CD4-positive, alpha-beta memory T cell (primary cell): ENCODE measurements at regions of chr9 and their contacts with region 1.

Region 1: DNA sequence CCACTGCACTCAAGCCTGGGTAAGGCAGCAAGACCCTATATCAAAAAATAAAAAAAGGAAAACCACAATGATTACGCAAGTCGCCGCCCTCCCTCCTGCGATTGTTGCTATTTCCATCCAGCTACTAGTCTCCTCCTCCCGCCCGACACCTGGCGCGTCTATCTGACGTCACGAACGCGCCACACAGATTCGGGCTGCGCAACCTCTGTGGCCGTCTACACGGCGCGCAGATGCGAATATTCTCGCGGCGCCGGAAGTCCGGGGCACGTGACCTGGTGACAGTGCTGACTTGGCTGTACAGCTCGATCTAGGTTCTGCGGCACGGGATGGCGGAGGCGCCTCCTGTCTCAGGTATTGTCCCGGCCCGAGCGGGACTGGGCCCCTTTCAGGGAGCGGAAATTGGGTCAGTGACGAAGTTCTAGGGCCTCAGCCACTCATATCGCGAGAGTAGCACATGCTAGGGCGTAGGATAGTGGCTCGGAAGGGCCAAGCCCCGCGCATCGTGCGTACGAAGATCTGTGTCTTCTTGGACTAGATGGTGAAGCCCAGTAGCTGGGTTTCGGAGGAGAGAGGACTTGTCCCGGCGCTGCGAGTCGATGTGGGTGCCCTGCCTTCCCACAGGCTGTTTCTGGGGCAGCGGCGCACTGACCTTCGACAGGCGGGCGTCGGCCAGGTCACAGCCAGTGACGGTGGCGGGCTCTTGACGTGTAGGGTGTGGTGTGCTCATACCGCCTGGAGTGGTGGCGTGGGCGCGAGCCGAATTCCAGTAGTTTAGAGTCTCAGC is at the start of gene NFX1:
- DNase-seq: peak; percentile 99 to 100 (median 100)
- H3K4me3 ChIP-seq: peak within 1 kb of the TSS; percentile 63 to 79
- H3K4me3 Mint-ChIP-seq: peak within 1 kb of the TSS; percentile 84 to 98 (median 96)
- H3K27ac ChIP-seq: peak within 1 kb of the TSS; percentile 98
- H3K27ac Mint-ChIP-seq: peak within 1 kb of the TSS; percentile 96 to 100 (median 100)
- H3K4me1 ChIP-seq: peaks cover 62% of the 10 kb centered on the region
- H3K4me1 Mint-ChIP-seq: peaks cover 32 to 64% (median 51%) of the 10 kb centered on the region in 4 donors
- H3K27me3 ChIP-seq: no peaks in the 10 kb centered on the region
- H3K27me3 Mint-ChIP-seq: no peaks in the 10 kb centered on the region
- total RNA-seq, gene NFX1: 63.7 to 64.7 TPM

Region 2: DNA sequence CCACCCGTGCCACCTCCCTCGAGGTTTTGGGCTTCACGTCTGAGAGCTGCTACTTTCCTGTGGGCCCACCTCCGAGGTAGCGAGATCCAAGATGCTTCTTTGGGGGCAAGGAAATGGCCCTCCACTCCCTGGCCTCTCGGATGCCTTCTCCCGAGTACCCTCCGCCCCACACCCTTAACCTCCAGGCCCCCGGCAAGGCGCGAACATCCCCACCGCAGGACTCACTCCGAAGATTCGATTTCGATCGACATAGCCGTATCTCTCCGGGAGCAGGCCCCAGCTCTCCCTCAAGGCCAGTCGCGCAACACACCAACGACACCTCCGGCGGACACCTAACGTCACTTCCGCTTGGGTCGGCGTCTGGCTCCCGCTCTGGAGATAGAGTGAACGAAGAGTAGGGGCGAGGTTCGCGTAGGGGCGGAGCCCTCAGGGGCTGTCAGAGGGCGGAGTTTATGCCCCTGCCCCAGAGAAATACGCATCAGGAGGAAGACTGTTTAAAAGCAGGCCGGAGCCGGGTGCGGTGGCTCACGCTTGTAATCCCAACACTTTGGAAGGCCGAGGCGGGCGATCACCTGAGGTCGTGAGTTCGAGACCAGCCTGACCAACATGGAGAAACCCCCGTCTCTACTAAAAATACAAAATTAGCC is 214.0 kb before region 1 on chr9 and contains the start of gene SMU1:
- CTCF ChIA-PET with region 1: no interaction called
- POLR2A ChIA-PET with region 1: interaction called, 14 read pairs
- intact Hi-C with region 1: loop called (anchors 1 kb)
- DNase-seq: peak; percentile 94 to 98 (median 96)
- H3K4me3 ChIP-seq: peak within 1 kb of the TSS; percentile 79 to 92
- H3K4me3 Mint-ChIP-seq: peak within 1 kb of the TSS; percentile 94 to 100 (median 99)
- H3K27ac ChIP-seq: peak within 1 kb of the TSS; percentile 94
- H3K27ac Mint-ChIP-seq: peak within 1 kb of the TSS; percentile 99 to 100 (median 100)
- H3K4me1 ChIP-seq: peaks cover 47% of the 10 kb centered on the region
- H3K4me1 Mint-ChIP-seq: peaks cover 17 to 51% (median 34%) of the 10 kb centered on the region in 4 donors
- H3K27me3 ChIP-seq: no peaks in the 10 kb centered on the region
- H3K27me3 Mint-ChIP-seq: no peaks in the 10 kb centered on the region
- total RNA-seq, gene SMU1: 30.9 to 31.6 TPM

Region 3: GRCh38 chr9:33225319-33226149 is 64.9 kb before region 1 on chr9:
- CTCF ChIA-PET with region 1: no interaction called
- POLR2A ChIA-PET with region 1: no interaction called
- intact Hi-C with region 1: no loop called
- DNase-seq: peak; percentile 63 to 74 (median 69)
- H3K4me3 ChIP-seq: no peak overlapping the region
- H3K4me3 Mint-ChIP-seq: peak overlapping the region in 1 of 8 donors; percentile 16
- H3K27ac ChIP-seq: no peak overlapping the region
- H3K27ac Mint-ChIP-seq: no peak overlapping the region
- H3K4me1 ChIP-seq: peaks cover 9% of the 10 kb centered on the region
- H3K4me1 Mint-ChIP-seq: peaks cover 7 to 12% (median 8%) of the 10 kb centered on the region in 4 donors
- H3K27me3 ChIP-seq: no peaks in the 10 kb centered on the region
- H3K27me3 Mint-ChIP-seq: no peaks in the 10 kb centered on the region

Region 4: GRCh38 chr9:33272061-33272460 is 18.4 kb before region 1 on chr9:
- CTCF ChIA-PET with region 1: interaction called, 10 read pairs
- POLR2A ChIA-PET with region 1: interaction called, 8 read pairs
- intact Hi-C with region 1: no loop called
- DNase-seq: no peak
- H3K4me3 ChIP-seq: no peak overlapping the region
- H3K4me3 Mint-ChIP-seq: no peak overlapping the region
- H3K27ac ChIP-seq: no peak overlapping the region
- H3K27ac Mint-ChIP-seq: peak overlapping the region in 2 of 7 donors; percentile 41 to 43
- H3K4me1 ChIP-seq: peaks cover 5% of the 10 kb centered on the region
- H3K4me1 Mint-ChIP-seq: peaks cover 10 to 17% (median 14%) of the 10 kb centered on the region in 4 donors
- H3K27me3 ChIP-seq: no peaks in the 10 kb centered on the region
- H3K27me3 Mint-ChIP-seq: no peaks in the 10 kb centered on the region

Region 5: DNA sequence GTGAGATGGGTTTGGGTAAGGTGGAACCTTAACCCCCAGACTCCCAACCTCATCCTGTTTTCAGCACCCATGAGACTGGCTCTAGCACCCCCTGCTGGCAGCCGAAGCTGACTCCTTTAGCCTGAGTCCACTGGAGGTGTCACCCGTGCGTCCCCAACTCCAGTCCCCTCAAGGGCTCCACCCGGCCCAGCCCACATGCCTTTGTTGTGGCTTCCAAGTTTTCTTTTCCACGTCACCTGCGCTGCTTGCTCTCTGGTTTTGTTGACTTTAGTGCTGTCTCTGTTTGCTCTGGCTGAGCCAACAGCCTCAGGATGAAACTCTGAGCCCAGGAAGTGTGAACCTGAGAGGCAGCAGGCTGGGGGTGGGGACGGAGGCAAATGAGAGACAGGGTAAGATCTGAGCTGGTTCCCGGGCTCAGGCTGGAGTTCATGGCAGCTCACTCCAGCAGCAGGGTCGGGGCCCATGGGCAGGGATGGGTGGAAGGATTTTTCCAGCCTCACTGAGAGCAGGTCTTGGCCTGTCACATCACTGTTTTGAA is 125.1 kb after region 1 on chr9:
- CTCF ChIA-PET with region 1: interaction called, 5 read pairs
- POLR2A ChIA-PET with region 1: interaction called, 16 read pairs
- intact Hi-C with region 1: loop called (anchors 2 kb)
- DNase-seq: peak; percentile 97 to 98 (median 97)
- H3K4me3 ChIP-seq: peak overlapping the region; percentile 31 to 50
- H3K4me3 Mint-ChIP-seq: peak overlapping the region; percentile 71 to 92 (median 86)
- H3K27ac ChIP-seq: peak overlapping the region; percentile 65
- H3K27ac Mint-ChIP-seq: peak overlapping the region; percentile 92 to 99 (median 98)
- H3K4me1 ChIP-seq: peaks cover 54% of the 10 kb centered on the region
- H3K4me1 Mint-ChIP-seq: peaks cover 38 to 65% (median 57%) of the 10 kb centered on the region in 4 donors
- H3K27me3 ChIP-seq: no peaks in the 10 kb centered on the region
- H3K27me3 Mint-ChIP-seq: no peaks in the 10 kb centered on the region

Region 6: DNA sequence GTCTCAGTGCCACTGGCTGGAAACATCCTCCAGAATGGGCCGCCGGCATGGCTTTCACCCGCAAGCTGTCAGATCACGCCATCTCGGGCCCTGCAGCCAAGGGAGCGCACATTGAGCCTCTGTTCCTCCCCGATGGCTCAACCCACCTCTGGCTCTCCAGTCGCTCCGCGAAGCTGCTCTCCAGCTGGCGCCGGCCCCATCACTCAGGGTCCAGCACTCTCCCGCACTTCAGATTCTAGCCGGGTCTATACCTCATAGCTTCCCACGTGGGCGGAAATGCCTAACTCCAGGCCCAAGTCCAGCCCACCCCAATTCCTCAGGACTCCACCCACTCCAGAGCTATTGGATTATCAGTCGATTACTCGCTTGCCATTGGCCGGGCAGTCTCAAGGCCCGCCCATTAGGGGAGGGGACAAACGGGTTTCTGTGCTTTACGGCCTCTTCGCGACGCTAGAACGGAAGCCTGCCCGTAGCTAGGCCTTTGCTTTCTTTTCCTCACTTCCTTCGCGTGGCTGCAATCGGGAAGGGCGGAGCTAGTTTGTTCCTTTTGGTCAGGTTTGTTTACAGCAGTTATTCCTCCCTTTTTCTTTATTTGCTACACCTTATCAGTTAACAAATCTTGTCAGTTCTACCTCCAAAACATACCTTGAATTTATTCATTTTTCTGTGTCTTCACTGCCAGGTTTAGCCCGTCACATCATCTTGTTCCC is 183.4 kb after region 1 on chr9 and contains the start of gene NOL6:
- CTCF ChIA-PET with region 1: interaction called, 4 read pairs
- POLR2A ChIA-PET with region 1: interaction called, 22 read pairs
- intact Hi-C with region 1: loop called (anchors 1 kb)
- DNase-seq: peak; percentile 98 to 99 (median 98)
- H3K4me3 ChIP-seq: peak within 1 kb of the TSS; percentile 80 to 93
- H3K4me3 Mint-ChIP-seq: peak within 1 kb of the TSS; percentile 95 to 100 (median 99)
- H3K27ac ChIP-seq: peak within 1 kb of the TSS; percentile 62
- H3K27ac Mint-ChIP-seq: peak within 1 kb of the TSS; percentile 90 to 100 (median 97)
- H3K4me1 ChIP-seq: peaks cover 27% of the 10 kb centered on the region
- H3K4me1 Mint-ChIP-seq: peaks cover 11 to 36% (median 28%) of the 10 kb centered on the region in 4 donors
- H3K27me3 ChIP-seq: no peaks in the 10 kb centered on the region
- H3K27me3 Mint-ChIP-seq: no peaks in the 10 kb centered on the region
- total RNA-seq, gene NOL6: 39.1 to 41.1 TPM